ENCODE measurements at regions of chr3 and their contacts with region 1.

Region 1: GRCh38 chr3:68893600-68894239 is 38.6 kb downstream of the TAFA4 start:
- H3K4me3 Mint-ChIP-seq: no peak overlapping the region
- H3K27ac Mint-ChIP-seq: no peak overlapping the region
- H3K4me1 Mint-ChIP-seq: no peaks in the 10 kb centered on the region
- H3K27me3 Mint-ChIP-seq: peaks cover 8% of the 10 kb centered on the region

Region 2: DNA sequence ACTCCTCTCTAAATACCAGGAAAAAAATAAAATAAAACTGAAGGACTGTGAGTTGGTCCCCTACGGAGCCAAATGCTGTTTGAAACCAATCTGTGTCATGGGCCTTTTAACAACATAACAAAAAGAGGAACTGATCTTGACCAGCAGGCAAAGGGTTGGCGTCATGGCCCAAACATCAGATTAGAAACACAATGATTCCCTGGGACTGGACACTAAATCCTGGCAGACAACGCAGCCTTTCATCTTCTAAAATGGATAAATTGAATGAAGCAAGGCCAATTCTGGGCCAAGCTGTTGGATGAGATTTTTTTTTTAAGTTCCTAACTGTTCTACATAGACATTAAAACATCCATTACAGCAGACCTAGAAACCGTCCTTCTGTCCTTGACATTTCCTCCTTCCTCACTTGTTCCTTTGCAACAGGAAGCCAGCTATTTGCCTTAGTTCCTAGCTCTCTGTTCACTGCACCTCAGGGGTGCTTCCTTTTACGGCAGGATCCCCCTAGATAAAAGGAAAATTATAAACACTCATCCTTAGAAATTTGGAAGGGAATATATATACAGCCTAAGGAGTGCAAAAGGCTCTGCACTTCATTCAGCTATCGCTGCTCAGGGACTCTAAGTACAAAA is 60.2 kb after region 1 on chr3:
- intact Hi-C with region 1: no loop called
- H3K4me3 Mint-ChIP-seq: no peak overlapping the region
- H3K27ac Mint-ChIP-seq: no peak overlapping the region
- H3K4me1 Mint-ChIP-seq: peaks cover 2% of the 10 kb centered on the region
- H3K27me3 Mint-ChIP-seq: peaks cover 13% of the 10 kb centered on the region

Region 3: GRCh38 chr3:68972358-68972979 is 78.7 kb after region 1 on chr3:
- intact Hi-C with region 1: loop called (anchors 2 kb)
- H3K4me3 Mint-ChIP-seq: no peak overlapping the region
- H3K27ac Mint-ChIP-seq: no peak overlapping the region
- H3K4me1 Mint-ChIP-seq: peaks cover 16% of the 10 kb centered on the region
- H3K27me3 Mint-ChIP-seq: peaks cover 13% of the 10 kb centered on the region

Region 4: GRCh38 chr3:69143605-69144004 is 249.9 kb after region 1 on chr3:
- intact Hi-C with region 1: no loop called
- H3K4me3 Mint-ChIP-seq: no peak overlapping the region
- H3K27ac Mint-ChIP-seq: no peak overlapping the region
- H3K4me1 Mint-ChIP-seq: peaks cover 14% of the 10 kb centered on the region
- H3K27me3 Mint-ChIP-seq: no peaks in the 10 kb centered on the region

Measured in dendritic cell treated with granulocyte-macrophage colony-stimulating factor and Interleukin-4, amounts not matched to agents 40 ng/mL and 50 ng/mL, for 4 days (primary cell).